ENCODE measurements at regions of chr21 and their contacts with region 1.

Region 1: GRCh38 chr21:34911360-34911759 is 137.7 kb downstream of the RUNX1 start:
- DNase-seq: no peak
- ATAC-seq: no peak
- H3K4me3 Mint-ChIP-seq: no peak overlapping the region
- H3K27ac Mint-ChIP-seq: no peak overlapping the region
- H3K4me1 Mint-ChIP-seq: peaks cover 62% of the 10 kb centered on the region
- H3K27me3 Mint-ChIP-seq: no peaks in the 10 kb centered on the region
- CTCF ChIP-seq: no peak

Region 2: GRCh38 chr21:34900376-34900775 is 11.0 kb before region 1 on chr21:
- CTCF ChIA-PET with region 1: interaction called, 11 read pairs
- POLR2A ChIA-PET with region 1: interaction called, 8 read pairs
- intact Hi-C with region 1: no loop called
- DNase-seq: no peak
- ATAC-seq: peak; percentile 45
- H3K4me3 Mint-ChIP-seq: no peak overlapping the region
- H3K27ac Mint-ChIP-seq: no peak overlapping the region
- H3K4me1 Mint-ChIP-seq: peaks cover 31% of the 10 kb centered on the region
- H3K27me3 Mint-ChIP-seq: no peaks in the 10 kb centered on the region
- CTCF ChIP-seq: no peak

Region 3: GRCh38 chr21:35172231-35172630 is 260.9 kb after region 1 on chr21:
- CTCF ChIA-PET with region 1: no interaction called
- POLR2A ChIA-PET with region 1: no interaction called
- intact Hi-C with region 1: no loop called
- DNase-seq: peak; percentile 61
- ATAC-seq: peak; percentile 82
- H3K4me3 Mint-ChIP-seq: no peak overlapping the region
- H3K27ac Mint-ChIP-seq: peak overlapping the region; percentile 4
- H3K4me1 Mint-ChIP-seq: peaks cover 27% of the 10 kb centered on the region
- H3K27me3 Mint-ChIP-seq: no peaks in the 10 kb centered on the region
- CTCF ChIP-seq: no peak